ENCODE measurements at regions of chr2 and their contacts with region 1.

Region 1: GRCh38 chr2:68448671-68449653 is 18.1 kb downstream of the FBXO48 start:
- DNase-seq: no peak
- H3K4me3 ChIP-seq: no peak overlapping the region
- H3K27ac ChIP-seq: no peak overlapping the region
- H3K4me1 ChIP-seq: no peaks in the 10 kb centered on the region
- H3K27me3 ChIP-seq: no peaks in the 10 kb centered on the region
- CTCF ChIP-seq: no peak
- POLR2A ChIP-seq: no peak

Region 2: DNA sequence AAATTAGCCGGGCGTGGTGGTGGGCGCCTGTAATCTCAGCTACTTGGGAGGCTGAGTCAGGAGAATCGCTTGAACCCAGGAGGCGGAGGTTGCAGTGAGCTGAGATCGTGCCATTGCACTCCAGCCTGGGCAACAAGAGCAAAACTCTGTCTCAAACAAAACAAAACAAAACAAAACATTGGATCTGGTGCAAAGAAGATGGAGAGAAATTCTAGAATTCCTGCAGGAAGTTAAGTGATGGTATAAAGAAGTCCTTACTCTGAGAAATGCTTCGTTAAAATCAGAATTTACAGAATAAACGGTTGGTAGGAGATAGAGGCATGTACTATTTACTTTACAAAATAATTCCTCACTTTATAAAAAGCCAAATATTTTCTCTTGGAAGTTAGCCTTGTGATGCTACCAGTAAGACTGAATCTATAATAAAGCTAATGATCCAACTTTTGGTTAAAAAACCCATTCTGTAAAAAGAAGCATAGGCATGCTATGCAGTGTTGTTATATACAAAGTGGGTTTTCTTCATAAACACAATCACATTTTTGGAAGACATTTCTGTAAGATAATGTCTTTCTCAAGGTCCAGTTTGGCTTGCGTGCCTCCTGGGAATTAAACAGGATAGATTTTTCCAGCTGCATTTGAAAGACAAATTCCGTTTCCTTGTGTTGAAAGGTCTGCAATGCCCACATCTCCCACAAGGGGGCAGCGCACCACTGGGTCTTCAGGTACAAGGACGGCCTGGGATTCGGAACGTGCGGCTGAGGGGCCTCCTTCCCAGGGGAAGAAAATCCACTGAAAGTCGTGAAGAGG is 326.9 kb before region 1 on chr2:
- intact Hi-C with region 1: loop called (anchors 5 kb)
- DNase-seq: no peak
- H3K4me3 ChIP-seq: no peak overlapping the region
- H3K27ac ChIP-seq: no peak overlapping the region
- H3K4me1 ChIP-seq: no peaks in the 10 kb centered on the region
- H3K27me3 ChIP-seq: no peaks in the 10 kb centered on the region
- CTCF ChIP-seq: peak; percentile 93 to 94 (median 94)
- POLR2A ChIP-seq: no peak

Region 3: DNA sequence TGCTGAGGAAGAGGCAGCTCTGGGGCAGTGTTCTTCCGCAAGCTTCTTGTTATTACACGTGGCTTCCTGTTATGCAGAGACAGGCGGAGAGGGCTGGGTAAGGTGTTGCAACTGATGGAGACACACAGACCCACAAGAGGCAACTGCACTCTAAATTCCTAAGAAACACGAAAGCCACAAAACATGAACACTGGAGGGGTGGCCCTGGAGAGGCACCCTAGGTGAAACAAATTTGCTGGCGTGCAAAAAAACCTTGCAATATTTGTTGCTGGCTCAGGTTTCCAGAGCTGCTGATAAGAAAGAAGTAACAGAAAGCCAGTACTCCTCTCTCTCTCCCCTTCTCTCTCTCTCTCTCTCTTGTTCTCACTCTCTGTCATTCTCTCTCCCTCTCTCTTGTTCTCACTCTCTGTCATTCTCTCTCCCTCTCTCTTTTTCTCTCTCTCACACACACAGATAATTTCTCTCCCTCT is 317.4 kb after region 1 on chr2:
- intact Hi-C with region 1: no loop called
- DNase-seq: no peak
- H3K4me3 ChIP-seq: no peak overlapping the region
- H3K27ac ChIP-seq: peak overlapping the region; percentile 17
- H3K4me1 ChIP-seq: peaks cover 35% of the 10 kb centered on the region
- H3K27me3 ChIP-seq: no peaks in the 10 kb centered on the region
- CTCF ChIP-seq: no peak
- POLR2A ChIP-seq: no peak